ENCODE measurements at regions of chr6 and their contacts with region 1.

Region 1: DNA sequence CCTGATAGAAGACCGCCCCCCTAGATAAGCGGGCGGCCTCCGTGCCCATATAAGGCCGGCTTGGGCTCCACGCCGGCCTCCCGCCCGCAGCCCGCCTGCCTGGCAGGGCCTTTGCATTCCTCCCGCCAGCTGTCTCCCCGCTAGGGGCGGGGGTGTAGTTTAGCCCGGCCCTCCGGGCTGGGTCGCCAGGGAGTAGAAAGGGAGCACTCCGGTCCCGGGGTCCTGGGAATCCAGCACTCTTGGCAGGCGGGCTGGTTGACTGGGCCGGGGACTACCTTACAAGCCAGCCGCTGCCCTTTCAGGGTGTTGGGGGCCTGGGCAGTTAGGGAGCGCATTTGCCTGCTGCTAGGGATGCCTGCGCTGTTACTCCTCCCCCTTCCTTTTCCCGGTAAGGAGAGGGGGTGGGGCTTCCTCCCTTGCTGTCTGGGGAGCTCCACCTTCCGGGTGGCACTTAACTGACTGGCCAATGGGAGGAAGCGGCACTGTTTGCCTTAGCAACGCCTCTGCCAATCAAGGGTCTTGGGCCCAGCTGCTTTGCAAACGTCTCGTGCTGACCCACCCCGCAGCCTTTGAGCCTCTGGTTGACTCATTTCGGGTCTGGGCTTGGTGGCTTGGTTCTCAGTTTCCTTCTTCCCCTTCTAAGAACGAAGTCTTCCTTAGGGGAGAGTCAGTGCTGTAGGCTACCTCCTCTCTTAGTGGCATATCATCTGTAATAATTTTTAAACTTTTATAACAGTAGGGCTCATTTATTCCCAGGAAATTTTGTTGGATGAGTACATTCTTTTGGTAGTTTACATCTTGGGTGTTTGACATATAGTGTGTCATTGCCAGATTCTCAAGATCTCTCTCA is 3.4 kb downstream of the SRF start:
- DNase-seq: peak; percentile 98
- H3K4me3 ChIP-seq: peak overlapping the region; percentile 87
- H3K27me3 ChIP-seq: no peaks in the 10 kb centered on the region
- CTCF ChIP-seq: peak; percentile 15; the same call in 1 of the 2 replicates

Region 2: GRCh38 chr6:42742116-42742894 is 432.2 kb before region 1 on chr6:
- CTCF ChIA-PET with region 1: no interaction called
- POLR2A ChIA-PET with region 1: interaction called, 13 read pairs
- DNase-seq: no peak
- H3K4me3 ChIP-seq: no peak overlapping the region
- H3K27me3 ChIP-seq: no peaks in the 10 kb centered on the region
- CTCF ChIP-seq: no peak

Region 3: DNA sequence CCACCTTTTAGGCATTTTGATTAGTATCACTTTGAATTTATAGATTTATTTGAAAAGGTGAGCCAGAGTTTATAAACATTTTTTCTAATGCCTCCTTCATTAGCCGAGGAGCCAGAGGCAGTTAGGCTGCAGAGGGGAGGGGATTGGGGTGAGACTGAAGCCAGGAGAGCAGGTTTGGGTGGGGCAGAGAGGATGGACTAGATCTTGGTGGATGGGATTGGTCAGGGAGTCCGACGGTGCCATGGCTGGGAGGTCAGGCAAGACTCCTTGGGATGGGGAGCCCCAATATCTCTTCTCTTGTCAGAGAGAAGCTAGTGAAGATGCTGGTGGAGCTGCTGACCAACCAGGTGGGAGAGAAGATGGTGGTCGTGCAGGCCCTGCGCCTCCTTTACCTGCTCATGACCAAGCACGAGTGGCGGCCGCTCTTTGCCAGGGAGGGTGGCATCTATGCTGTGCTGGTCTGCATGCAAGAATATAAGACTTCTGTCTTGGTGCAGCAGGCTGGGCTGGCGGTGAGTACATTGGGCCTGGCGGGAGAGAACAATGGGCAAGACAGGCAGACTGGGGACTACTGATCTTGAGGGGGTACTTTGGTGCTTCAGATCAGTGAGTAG is 18.3 kb after region 1 on chr6:
- CTCF ChIA-PET with region 1: no interaction called
- POLR2A ChIA-PET with region 1: no interaction called
- DNase-seq: no peak
- H3K4me3 ChIP-seq: no peak overlapping the region
- H3K27me3 ChIP-seq: no peaks in the 10 kb centered on the region
- CTCF ChIP-seq: no peak

Measured in BJ (cell line).